ENCODE measurements at regions of chr7 and their contacts with region 1.

Region 1: GRCh38 chr7:26365077-26365900 is 73.6 kb downstream of the SNX10 start:
- DNase-seq: peak; percentile 60
- ATAC-seq: peak; percentile 61
- H3K4me3 Mint-ChIP-seq: no peak overlapping the region
- H3K27ac Mint-ChIP-seq: no peak overlapping the region
- H3K4me1 Mint-ChIP-seq: peaks cover 8% of the 10 kb centered on the region
- H3K27me3 Mint-ChIP-seq: no peaks in the 10 kb centered on the region

Region 2: GRCh38 chr7:26090927-26091519 is 274.3 kb before region 1 on chr7:
- CTCF ChIA-PET with region 1: interaction called, 42 read pairs
- POLR2A ChIA-PET with region 1: no interaction called
- intact Hi-C with region 1: loop called (anchors 1 kb)
- DNase-seq: no peak
- ATAC-seq: peak; percentile 71
- H3K4me3 Mint-ChIP-seq: no peak overlapping the region
- H3K27ac Mint-ChIP-seq: peak overlapping the region; percentile 1
- H3K4me1 Mint-ChIP-seq: peaks cover 20% of the 10 kb centered on the region
- H3K27me3 Mint-ChIP-seq: no peaks in the 10 kb centered on the region

Region 3: GRCh38 chr7:26291699-26292538 is 73.4 kb before region 1 on chr7 and contains the start of gene SNX10:
- CTCF ChIA-PET with region 1: interaction called, 5 read pairs
- POLR2A ChIA-PET with region 1: no interaction called
- intact Hi-C with region 1: loop called (anchors 2 kb)
- DNase-seq: peak; percentile 81
- ATAC-seq: peak; percentile 68
- H3K4me3 Mint-ChIP-seq: peak within 1 kb of the TSS; percentile 85
- H3K27ac Mint-ChIP-seq: peak within 1 kb of the TSS; percentile 84
- H3K4me1 Mint-ChIP-seq: peaks cover 33% of the 10 kb centered on the region
- H3K27me3 Mint-ChIP-seq: no peaks in the 10 kb centered on the region
- total RNA-seq, gene SNX10: 28.1 to 35.5 TPM

Region 4: DNA sequence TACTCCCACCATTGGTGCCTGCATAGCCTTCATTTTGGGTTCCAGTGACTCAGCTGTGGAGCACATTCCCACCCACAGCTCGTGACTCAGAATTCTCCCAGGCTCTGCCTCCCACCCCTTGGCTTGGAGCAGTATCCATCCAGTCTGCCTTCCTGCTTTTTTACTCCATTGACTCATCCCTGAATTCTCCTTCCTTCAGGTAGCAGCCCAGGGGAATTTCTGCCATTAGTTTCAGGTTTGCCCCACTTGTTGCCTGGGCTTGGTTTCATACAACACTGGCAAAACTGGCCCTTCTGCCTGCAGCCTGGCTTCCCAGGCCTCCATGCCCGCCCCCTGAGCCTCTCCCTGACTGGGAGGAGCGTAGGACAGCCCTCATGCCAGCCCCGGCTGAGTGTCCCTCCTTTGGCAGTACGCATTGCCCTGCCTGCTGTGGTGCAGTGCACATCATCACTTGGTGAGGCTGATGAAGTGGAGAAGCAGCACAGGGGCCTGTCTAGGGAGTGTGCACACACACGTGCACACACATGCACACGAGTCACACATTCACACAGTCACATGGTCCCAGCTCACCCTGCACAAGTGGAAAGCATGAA is 18.6 kb before region 1 on chr7:
- CTCF ChIA-PET with region 1: interaction called, 21 read pairs
- POLR2A ChIA-PET with region 1: no interaction called
- intact Hi-C with region 1: no loop called
- DNase-seq: peak; percentile 39
- ATAC-seq: peak; percentile 96
- H3K4me3 Mint-ChIP-seq: no peak overlapping the region
- H3K27ac Mint-ChIP-seq: peak overlapping the region; percentile 19
- H3K4me1 Mint-ChIP-seq: peaks cover 7% of the 10 kb centered on the region
- H3K27me3 Mint-ChIP-seq: no peaks in the 10 kb centered on the region

Region 5: DNA sequence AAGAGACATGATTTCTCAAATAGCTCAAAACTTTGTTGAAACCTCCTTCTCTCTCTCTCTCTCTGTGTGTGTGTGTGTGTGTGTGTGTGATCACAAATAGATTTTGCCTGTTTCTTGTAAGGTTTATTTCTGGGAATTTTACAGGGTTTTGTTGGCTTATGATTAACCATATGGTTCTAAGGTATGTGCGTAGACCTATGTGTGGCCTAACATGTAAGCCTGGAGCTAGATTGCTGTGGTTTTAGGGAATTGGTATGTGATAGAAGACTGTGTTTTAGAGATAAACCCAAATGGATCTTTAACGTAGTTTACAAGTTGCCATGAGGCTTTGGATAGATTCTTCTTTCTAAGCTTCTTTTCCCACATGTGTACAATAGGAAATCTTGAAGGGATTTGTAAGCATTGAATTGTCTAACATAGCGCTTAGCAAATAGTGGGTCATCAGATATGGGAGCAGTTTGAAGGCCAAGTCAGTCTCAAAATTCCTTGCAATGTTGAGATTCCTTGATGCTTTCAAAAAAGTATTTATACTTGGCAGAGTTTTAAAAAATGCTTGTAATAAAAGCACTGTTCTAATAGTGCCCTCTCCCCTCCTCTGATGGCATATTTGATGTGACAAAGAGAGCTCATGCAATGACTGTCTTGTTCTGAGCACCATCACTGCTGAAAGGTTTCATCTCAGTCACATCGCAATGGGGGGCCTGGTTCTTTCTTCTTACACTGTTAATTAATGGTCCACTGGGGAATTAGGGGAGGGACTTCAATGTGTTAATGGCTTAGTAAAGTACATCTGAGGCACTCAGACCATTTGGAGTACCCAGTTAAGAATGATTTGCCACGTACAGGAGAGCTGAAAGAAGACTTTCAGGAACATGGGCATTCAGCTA is 44.6 kb after region 1 on chr7:
- CTCF ChIA-PET with region 1: interaction called, 10 read pairs
- POLR2A ChIA-PET with region 1: no interaction called
- intact Hi-C with region 1: no loop called
- DNase-seq: no peak
- ATAC-seq: no peak
- H3K4me3 Mint-ChIP-seq: no peak overlapping the region
- H3K27ac Mint-ChIP-seq: no peak overlapping the region
- H3K4me1 Mint-ChIP-seq: no peaks in the 10 kb centered on the region
- H3K27me3 Mint-ChIP-seq: peaks cover 9% of the 10 kb centered on the region

Region 6: DNA sequence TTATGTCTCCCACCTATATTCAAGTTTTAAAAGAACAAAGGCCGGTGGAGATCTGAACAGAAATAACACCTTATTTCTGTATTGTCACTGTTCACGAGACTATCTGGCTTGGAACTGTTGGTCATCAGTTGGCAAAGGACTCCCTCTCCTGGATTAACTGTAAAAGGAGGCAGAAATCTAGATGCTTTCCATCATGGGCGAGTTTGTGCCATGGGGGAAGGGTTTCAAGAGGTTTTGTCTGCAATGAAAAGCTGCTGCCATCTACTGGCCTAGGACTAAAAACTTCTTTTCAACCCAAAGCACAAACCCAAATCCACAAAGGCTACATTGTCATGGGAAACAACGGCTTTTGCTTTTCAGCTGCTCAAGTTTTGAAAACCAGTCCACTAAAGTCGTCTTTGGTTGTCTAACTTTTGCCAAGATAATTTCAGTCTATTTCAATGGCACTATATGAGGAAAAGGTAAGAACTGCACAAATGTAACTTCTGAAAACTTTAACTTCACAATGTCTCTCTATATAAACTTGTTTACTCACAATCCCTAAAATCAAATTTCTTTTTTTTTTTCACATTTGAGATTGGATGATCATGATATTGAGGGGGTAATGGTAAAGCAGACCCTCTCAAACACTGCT is 302.3 kb after region 1 on chr7:
- CTCF ChIA-PET with region 1: interaction called, 37 read pairs
- POLR2A ChIA-PET with region 1: no interaction called
- intact Hi-C with region 1: loop called (anchors 1 kb)
- DNase-seq: peak; percentile 68
- ATAC-seq: peak; percentile 61
- H3K4me3 Mint-ChIP-seq: no peak overlapping the region
- H3K27ac Mint-ChIP-seq: no peak overlapping the region
- H3K4me1 Mint-ChIP-seq: peaks cover 15% of the 10 kb centered on the region
- H3K27me3 Mint-ChIP-seq: peaks cover 11% of the 10 kb centered on the region